RWPE1 (cell line): ENCODE measurements at regions of chr5 and their contacts with region 1.

Region 1: DNA sequence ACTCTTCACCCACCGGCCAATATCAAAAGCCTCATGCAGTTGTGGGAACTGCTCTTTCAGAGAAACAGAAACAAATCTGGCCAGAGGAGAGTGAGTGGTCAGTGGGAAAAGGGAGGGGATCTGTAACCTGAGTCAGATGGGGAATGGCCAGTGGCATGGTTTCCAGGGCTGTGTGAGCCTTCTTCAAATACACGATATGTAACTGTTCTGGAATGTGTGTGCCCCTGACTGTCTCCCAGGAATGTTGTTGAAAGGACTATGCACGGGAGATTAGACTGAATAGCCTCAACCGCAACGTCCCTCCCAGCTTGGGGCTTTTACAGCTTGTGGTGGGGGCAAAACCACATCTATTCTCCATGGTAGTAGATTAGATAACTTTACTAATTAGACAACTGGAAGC is 60.8 kb downstream of the SH3TC2 start:
- DNase-seq: peak; percentile 86
- H3K27ac ChIP-seq: peak overlapping the region; percentile 40; the same call in 1 of the 2 replicates
- CTCF ChIP-seq: no peak

Region 2: DNA sequence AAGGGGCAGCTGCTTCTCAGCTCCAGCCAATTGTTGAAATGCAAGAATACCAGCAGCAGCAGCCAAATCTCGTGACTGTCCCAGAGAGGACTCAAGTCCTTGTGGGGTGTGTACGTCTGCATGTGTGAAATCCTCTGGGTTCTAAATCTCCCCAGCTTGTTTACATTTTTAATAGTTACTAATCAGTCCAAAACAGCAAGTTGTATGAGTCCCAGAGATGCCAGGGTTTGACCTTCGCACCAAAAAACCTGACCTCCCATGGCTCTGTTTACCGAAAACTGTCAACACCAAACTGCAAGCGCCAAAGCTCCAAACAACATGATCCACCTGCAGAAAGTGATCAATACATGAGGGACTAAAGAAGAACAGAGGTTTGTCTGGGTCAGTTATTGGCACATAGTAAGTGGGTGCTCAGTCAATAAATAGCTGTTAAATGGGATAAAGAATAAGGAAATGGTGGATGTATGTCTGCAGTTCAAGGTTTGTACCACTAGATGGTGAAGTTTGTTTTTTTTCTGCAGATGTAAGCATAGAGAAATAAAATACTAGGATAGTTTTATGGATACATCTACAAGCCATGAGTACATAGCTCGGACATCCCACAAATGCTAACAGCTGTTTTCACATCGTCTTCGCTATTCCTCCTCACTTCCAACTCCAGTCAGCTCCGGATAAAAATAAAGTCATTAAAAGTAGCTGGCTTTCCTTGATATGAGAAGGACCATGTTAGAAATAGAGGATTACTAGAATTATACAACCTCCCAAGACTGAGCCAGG is 260.9 kb before region 1 on chr5:
- CTCF ChIA-PET with region 1: interaction called, 57 read pairs
- POLR2A ChIA-PET with region 1: no interaction called
- DNase-seq: peak; percentile 77
- H3K27ac ChIP-seq: no peak overlapping the region
- CTCF ChIP-seq: peak; percentile 85

Region 3: GRCh38 chr5:148912714-148913398 is 89.2 kb before region 1 on chr5:
- CTCF ChIA-PET with region 1: interaction called, 10 read pairs
- POLR2A ChIA-PET with region 1: no interaction called
- DNase-seq: peak; percentile 100
- H3K27ac ChIP-seq: peak overlapping the region; percentile 97
- CTCF ChIP-seq: peak; percentile 72; the same call in 1 of the 2 replicates

Region 4: GRCh38 chr5:149114403-149115312 is 112.6 kb after region 1 on chr5:
- CTCF ChIA-PET with region 1: interaction called, 12 read pairs
- POLR2A ChIA-PET with region 1: no interaction called
- DNase-seq: peak; percentile 75
- H3K27ac ChIP-seq: no peak overlapping the region; the same call in 1 of the 2 replicates
- CTCF ChIP-seq: peak; percentile 90